Left ventricle myocardium inferior (tissue), 1 donor: ENCODE measurements at regions of chr1 and their contacts with region 1.

Region 1: GRCh38 chr1:24541711-24542346 is 14.1 kb upstream of the NCMAP start:
- DNase-seq: no peak
- H3K4me3 ChIP-seq: no peak overlapping the region
- H3K27ac ChIP-seq: no peak overlapping the region
- H3K4me1 ChIP-seq: no peaks in the 10 kb centered on the region
- H3K27me3 ChIP-seq: peaks cover under 1% of the 10 kb centered on the region
- CTCF ChIP-seq: peak; percentile 72

Region 2: GRCh38 chr1:24294757-24295371 is 247.0 kb before region 1 on chr1:
- intact Hi-C with region 1: no loop called
- DNase-seq: no peak
- H3K4me3 ChIP-seq: no peak overlapping the region
- H3K27ac ChIP-seq: no peak overlapping the region
- H3K4me1 ChIP-seq: peaks cover 11% of the 10 kb centered on the region
- H3K27me3 ChIP-seq: peaks cover 5% of the 10 kb centered on the region
- CTCF ChIP-seq: no peak

Region 3: DNA sequence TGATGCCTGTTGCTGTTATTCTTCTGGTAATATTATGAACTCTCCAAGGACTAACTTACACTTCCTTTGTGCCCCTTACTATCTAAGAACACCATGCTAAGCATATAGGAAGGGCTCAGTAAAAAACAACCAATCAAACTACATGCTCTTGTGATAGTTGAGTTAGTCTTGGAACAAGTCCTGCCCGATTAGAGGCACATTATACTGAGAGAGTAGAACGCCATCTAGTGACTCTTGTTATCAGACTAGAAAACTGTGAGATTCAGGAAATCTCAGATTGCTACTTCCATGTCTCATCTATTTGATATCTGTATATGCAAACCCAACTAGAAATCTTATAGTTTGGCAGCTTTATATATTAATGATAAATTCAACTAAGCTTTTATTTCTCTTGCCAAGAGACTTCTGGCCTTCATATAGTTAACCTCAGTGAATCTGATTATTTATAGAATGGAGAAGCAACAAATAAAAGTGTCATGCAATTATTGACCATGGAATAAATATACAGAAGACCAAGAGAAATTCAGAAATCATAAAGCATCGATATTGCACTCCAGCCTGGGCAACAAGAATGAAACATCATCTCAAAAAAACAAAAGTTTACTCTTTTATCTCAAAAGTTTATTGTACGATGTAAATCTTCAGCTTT is 93.5 kb after region 1 on chr1:
- intact Hi-C with region 1: loop called (anchors 10 kb)
- DNase-seq: no peak
- H3K4me3 ChIP-seq: no peak overlapping the region
- H3K27ac ChIP-seq: no peak overlapping the region
- H3K4me1 ChIP-seq: peaks cover 3% of the 10 kb centered on the region
- H3K27me3 ChIP-seq: peaks cover 4% of the 10 kb centered on the region
- CTCF ChIP-seq: peak; percentile 70

Region 4: DNA sequence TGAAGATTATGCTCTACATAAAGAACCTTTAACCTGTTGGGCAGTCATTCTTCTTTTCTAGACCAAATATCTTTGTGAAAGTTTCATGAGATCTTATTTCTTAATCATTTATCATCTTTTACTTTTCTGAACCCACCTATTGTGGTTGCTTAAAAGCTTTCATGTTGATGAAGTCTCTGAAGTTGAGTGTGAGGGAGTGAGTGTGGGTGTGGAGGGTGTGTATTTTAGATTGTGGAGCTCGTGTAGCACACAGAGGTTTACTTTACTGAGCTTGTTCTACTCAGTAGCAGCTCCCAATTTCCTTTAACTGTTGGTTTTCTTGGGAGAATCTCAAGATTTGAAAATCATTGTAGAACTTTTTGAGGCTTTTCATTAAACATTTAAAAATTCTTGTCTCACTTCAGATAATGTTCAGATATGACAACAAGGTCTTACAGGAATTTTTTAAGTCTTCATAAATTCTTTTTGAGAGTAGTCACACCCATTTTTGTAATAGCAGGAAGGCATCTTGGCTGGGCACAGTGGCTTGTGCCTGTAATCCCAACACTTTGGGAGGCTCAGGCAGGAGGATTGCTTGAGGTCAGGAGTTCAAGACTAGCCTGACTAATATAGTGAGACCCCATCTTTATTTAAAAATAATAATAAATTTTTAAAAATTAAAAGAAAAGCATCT is 118.3 kb after region 1 on chr1:
- intact Hi-C with region 1: no loop called
- DNase-seq: no peak
- H3K4me3 ChIP-seq: no peak overlapping the region
- H3K27ac ChIP-seq: no peak overlapping the region
- H3K4me1 ChIP-seq: peaks cover 29% of the 10 kb centered on the region
- H3K27me3 ChIP-seq: no peaks in the 10 kb centered on the region
- CTCF ChIP-seq: no peak